ENCODE measurements at regions of chr20 and their contacts with region 1.

Region 1: DNA sequence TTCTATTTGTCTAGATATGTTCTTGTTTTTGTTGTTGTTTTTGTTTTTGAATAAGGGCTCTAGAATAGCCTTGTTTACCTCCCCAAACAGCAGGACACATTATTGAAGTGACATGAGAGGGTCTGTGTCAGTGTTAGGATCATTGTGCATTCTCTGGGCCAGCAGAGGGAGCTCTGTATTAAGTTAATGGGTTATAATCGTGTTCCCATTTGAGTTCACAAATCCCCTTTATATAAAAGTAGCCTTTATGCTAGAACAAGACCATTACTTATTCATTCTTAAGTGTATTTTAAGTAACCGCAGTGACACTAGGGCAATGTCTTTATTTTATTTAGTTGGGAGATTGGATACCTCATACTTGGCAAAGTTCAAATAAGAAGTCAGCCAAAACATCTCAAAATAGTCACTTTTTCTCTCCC is 44.8 kb downstream of the STK4 start:
- DNase-seq: peak; percentile 75
- H3K4me3 Mint-ChIP-seq: no peak overlapping the region
- H3K27ac Mint-ChIP-seq: no peak overlapping the region
- H3K4me1 Mint-ChIP-seq: peaks cover 47% of the 10 kb centered on the region
- H3K27me3 Mint-ChIP-seq: no peaks in the 10 kb centered on the region

Region 2: GRCh38 chr20:44504402-44505315 is 506.5 kb before region 1 on chr20:
- CTCF ChIA-PET with region 1: no interaction called
- intact Hi-C with region 1: no loop called
- DNase-seq: no peak
- H3K4me3 Mint-ChIP-seq: no peak overlapping the region
- H3K27ac Mint-ChIP-seq: no peak overlapping the region
- H3K4me1 Mint-ChIP-seq: peaks cover 3% of the 10 kb centered on the region
- H3K27me3 Mint-ChIP-seq: no peaks in the 10 kb centered on the region

Region 3: GRCh38 chr20:45028424-45029136 is 17.5 kb after region 1 on chr20:
- CTCF ChIA-PET with region 1: interaction called, 9 read pairs
- intact Hi-C with region 1: loop called (anchors 2 kb)
- DNase-seq: peak; percentile 25
- H3K4me3 Mint-ChIP-seq: no peak overlapping the region
- H3K27ac Mint-ChIP-seq: peak overlapping the region; percentile 72
- H3K4me1 Mint-ChIP-seq: peaks cover 68% of the 10 kb centered on the region
- H3K27me3 Mint-ChIP-seq: no peaks in the 10 kb centered on the region

Region 4: DNA sequence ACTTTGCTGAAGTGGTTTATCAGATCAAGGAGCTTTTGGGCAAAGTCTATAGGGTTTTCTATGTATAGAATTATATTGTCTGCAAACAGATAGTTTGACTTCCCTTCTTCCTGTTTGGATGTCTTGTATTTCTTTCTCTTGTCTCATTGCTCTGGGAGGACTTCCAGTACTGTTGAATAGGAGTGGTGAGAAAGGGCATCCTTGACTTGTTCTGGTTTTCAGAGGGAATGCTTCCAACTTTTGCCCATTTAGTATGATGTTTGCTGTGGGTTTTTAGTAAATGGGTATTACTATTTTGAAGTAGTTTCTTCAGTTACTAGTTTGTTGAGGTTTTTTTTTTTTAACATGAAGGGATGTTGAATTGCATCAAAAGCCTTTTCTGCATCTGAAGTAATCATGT is 53.7 kb after region 1 on chr20:
- CTCF ChIA-PET with region 1: no interaction called
- intact Hi-C with region 1: no loop called
- DNase-seq: no peak
- H3K4me3 Mint-ChIP-seq: no peak overlapping the region
- H3K27ac Mint-ChIP-seq: peak overlapping the region; percentile 20
- H3K4me1 Mint-ChIP-seq: peaks cover 73% of the 10 kb centered on the region
- H3K27me3 Mint-ChIP-seq: no peaks in the 10 kb centered on the region